Activated CD4-positive, alpha-beta T cell treated with anti-CD3 and anti-CD28 coated beads for 36 hours (primary cell): ENCODE measurements at regions of chr19 and their contacts with region 1.

Region 1: GRCh38 chr19:13150187-13150930 is at the starts of genes IER2 and STX10:
- DNase-seq: peak; percentile 96
- ATAC-seq: peak; percentile 52
- H3K4me3 Mint-ChIP-seq: peak within 1 kb of the TSS; percentile 87
- H3K27ac Mint-ChIP-seq: peak within 1 kb of the TSS; percentile 97
- H3K4me1 Mint-ChIP-seq: peaks cover 18% of the 10 kb centered on the region
- H3K27me3 Mint-ChIP-seq: no peaks in the 10 kb centered on the region
- total RNA-seq, gene IER2: 109 to 118 TPM
- total RNA-seq, gene STX10: 64.8 to 71.4 TPM

Region 2: DNA sequence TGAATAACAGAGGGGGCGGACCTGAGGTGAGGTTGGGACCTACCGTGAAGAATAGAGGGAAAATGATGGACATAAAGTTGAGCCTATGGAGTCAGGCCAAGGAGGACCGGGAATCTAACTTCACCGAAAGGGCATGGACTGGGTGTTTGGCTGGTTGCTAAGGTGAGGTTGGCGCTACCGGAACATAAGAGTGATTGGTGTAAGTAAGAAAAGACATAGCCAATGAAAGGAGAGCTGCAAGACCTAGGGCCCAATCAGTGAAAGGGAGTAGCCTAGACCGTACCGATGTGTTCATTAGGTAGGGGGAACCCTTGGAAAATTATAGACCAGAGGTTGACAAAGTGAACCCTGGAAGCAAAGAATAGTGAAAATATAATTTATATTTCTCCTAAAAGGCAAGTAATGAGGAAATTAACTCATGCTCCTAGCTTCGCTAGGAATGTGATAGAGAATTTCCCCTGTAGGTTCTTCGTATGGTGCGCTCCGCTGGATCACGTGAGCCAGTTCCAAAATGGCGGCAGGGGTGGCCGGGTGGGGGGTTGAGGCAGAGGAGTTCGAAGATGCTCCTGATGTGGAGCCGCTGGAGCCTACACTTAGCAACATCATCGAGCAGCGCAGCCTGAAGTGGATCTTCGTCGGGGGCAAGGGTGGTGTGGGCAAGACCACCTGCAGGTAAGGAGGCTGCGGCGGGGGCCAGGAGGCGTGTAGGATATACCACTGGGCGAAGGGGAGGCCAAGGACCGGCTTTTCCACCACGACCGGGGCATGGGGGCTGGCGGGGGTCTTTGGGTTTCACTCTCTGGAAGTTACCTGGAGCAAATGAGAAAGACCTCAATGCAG is 413.1 kb before region 1 on chr19 and contains the start of gene GET3:
- CTCF ChIA-PET with region 1: no interaction called
- POLR2A ChIA-PET with region 1: no interaction called
- intact Hi-C with region 1: loop called in 1 of 2 experiments (anchors 1 kb)
- DNase-seq: peak; percentile 89
- ATAC-seq: peak; percentile 88
- H3K4me3 Mint-ChIP-seq: peak within 1 kb of the TSS; percentile 98
- H3K27ac Mint-ChIP-seq: peak within 1 kb of the TSS; percentile 94
- H3K4me1 Mint-ChIP-seq: peaks cover 32% of the 10 kb centered on the region
- H3K27me3 Mint-ChIP-seq: no peaks in the 10 kb centered on the region
- total RNA-seq, gene GET3: 53.7 to 61.9 TPM

Region 3: DNA sequence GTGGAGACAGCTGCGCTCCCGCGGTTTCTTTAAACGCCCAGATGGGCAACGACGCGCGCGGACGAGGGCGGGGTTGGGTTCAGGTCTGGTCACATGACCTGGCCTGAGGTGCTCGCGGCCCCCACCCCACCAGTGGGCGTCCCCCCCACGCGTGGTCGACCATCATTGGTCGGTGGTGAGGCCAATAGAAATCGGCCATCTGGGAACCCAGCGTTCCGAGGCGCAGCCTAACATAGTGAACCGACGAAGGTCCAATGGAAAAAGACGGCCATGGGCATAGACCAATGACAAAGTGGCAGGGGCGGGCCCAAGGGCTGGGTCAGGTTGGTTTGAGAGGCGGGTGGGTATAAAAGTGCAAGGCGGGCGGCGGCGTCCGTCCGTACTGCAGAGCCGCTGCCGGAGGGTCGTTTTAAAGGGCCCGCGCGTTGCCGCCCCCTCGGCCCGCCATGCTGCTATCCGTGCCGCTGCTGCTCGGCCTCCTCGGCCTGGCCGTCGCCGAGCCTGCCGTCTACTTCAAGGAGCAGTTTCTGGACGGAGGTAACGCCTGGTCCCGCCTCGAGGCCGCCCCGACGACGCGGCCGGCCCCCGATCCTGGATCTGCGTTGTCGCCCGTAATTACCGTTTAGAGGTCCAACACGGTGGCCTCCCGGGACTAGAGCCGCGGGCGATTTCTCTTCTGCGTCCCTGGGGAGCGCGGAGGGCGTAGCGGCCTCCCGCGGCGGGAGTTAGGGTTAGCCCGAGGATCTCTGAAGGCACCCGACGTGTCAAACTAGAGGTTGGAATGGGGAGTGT is 211.9 kb before region 1 on chr19 and contains the start of gene CALR:
- CTCF ChIA-PET with region 1: no interaction called
- POLR2A ChIA-PET with region 1: interaction called, 3 read pairs
- intact Hi-C with region 1: loop called in 1 of 2 experiments (anchors 2 kb)
- DNase-seq: peak; percentile 99
- ATAC-seq: peak; percentile 89
- H3K4me3 Mint-ChIP-seq: peak within 1 kb of the TSS; percentile 99
- H3K27ac Mint-ChIP-seq: peak within 1 kb of the TSS; percentile 96
- H3K4me1 Mint-ChIP-seq: peaks cover 59% of the 10 kb centered on the region
- H3K27me3 Mint-ChIP-seq: no peaks in the 10 kb centered on the region
- total RNA-seq, gene CALR: 557 to 569 TPM

Region 4: GRCh38 chr19:13117772-13118423 is 32.5 kb before region 1 on chr19 and contains the start of gene NACC1:
- CTCF ChIA-PET with region 1: interaction called, 7 read pairs
- POLR2A ChIA-PET with region 1: interaction called, 18 read pairs
- intact Hi-C with region 1: loop called (anchors 1 kb)
- DNase-seq: peak; percentile 95
- ATAC-seq: peak; percentile 85
- H3K4me3 Mint-ChIP-seq: peak within 1 kb of the TSS; percentile 87
- H3K27ac Mint-ChIP-seq: peak within 1 kb of the TSS; percentile 95
- H3K4me1 Mint-ChIP-seq: peaks cover 49% of the 10 kb centered on the region
- H3K27me3 Mint-ChIP-seq: no peaks in the 10 kb centered on the region
- total RNA-seq, gene NACC1: 77.5 to 84.5 TPM

Region 5: GRCh38 chr19:13234518-13234917 is 84.2 kb after region 1 on chr19:
- CTCF ChIA-PET with region 1: no interaction called
- POLR2A ChIA-PET with region 1: interaction called, 3 read pairs
- intact Hi-C with region 1: loop called in 1 of 2 experiments (anchors 1 kb)
- DNase-seq: peak; percentile 86
- ATAC-seq: peak; percentile 95
- H3K4me3 Mint-ChIP-seq: peak overlapping the region; percentile 47
- H3K27ac Mint-ChIP-seq: peak overlapping the region; percentile 71
- H3K4me1 Mint-ChIP-seq: peaks cover 14% of the 10 kb centered on the region
- H3K27me3 Mint-ChIP-seq: no peaks in the 10 kb centered on the region

Region 6: DNA sequence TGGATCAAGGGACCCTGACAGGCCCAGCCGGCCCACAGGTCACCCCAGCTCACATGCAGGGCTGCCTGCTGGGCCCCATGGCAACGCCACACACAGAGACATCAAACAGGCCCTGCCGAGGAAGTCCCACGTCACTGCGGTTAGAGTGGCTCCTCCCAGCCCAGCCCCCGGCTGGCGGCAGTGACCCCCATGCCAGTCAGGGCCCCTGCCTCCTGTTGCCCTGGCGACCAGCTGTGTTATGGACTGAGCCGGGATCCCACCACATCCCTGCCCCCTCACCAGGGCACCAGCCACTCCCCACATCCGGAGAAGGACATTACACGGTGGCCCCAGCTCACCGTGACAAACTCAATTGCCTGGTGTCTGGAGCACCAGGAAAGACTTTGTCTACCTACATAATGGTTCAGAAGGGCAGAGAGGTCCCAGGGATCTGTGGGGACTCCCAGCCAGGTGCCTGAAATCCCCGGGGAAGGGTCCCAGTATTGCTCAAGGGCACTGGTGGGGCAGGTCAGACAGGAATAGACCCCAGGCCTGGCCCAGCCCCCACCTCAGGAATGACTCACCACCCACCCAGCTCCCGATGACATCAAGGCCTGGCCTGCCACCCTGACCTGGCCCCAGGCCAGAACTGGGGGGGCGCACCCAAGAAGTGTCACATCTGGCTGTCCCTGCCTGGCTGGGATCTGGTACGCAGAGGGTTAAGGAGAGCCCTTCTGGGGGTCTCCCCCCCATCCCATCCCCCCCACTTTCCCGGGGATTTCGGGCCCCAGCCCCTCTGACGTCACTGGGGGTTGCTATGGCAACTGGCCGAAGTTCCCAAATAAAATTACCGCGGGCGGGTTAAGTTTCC is 696.4 kb after region 1 on chr19:
- CTCF ChIA-PET with region 1: no interaction called
- POLR2A ChIA-PET with region 1: no interaction called
- intact Hi-C with region 1: loop called (anchors 2 to 10 kb)
- DNase-seq: peak; percentile 97
- ATAC-seq: peak; percentile 69
- H3K4me3 Mint-ChIP-seq: peak overlapping the region; percentile 71
- H3K27ac Mint-ChIP-seq: peak overlapping the region; percentile 97
- H3K4me1 Mint-ChIP-seq: peaks cover 56% of the 10 kb centered on the region
- H3K27me3 Mint-ChIP-seq: no peaks in the 10 kb centered on the region

Region 7: GRCh38 chr19:14529254-14530004 is 1379.1 kb after region 1 on chr19 and contains the start of gene TECR:
- CTCF ChIA-PET with region 1: no interaction called
- POLR2A ChIA-PET with region 1: no interaction called
- intact Hi-C with region 1: loop called in 1 of 2 experiments (anchors 10 kb)
- DNase-seq: peak; percentile 100
- ATAC-seq: peak; percentile 98
- H3K4me3 Mint-ChIP-seq: peak within 1 kb of the TSS; percentile 83
- H3K27ac Mint-ChIP-seq: peak within 1 kb of the TSS; percentile 90
- H3K4me1 Mint-ChIP-seq: peaks cover 37% of the 10 kb centered on the region
- H3K27me3 Mint-ChIP-seq: no peaks in the 10 kb centered on the region
- total RNA-seq, gene TECR: 106 to 145 TPM